ENCODE measurements at regions of chr6 and their contacts with region 1.

Region 1: GRCh38 chr6:27213544-27214125 is 33.9 kb upstream of the PRSS16 start:
- DNase-seq: no peak
- H3K4me3 Mint-ChIP-seq: no peak overlapping the region
- H3K27ac Mint-ChIP-seq: no peak overlapping the region
- H3K4me1 Mint-ChIP-seq: no peaks in the 10 kb centered on the region
- H3K27me3 Mint-ChIP-seq: no peaks in the 10 kb centered on the region
- CTCF ChIP-seq: no peak

Region 2: DNA sequence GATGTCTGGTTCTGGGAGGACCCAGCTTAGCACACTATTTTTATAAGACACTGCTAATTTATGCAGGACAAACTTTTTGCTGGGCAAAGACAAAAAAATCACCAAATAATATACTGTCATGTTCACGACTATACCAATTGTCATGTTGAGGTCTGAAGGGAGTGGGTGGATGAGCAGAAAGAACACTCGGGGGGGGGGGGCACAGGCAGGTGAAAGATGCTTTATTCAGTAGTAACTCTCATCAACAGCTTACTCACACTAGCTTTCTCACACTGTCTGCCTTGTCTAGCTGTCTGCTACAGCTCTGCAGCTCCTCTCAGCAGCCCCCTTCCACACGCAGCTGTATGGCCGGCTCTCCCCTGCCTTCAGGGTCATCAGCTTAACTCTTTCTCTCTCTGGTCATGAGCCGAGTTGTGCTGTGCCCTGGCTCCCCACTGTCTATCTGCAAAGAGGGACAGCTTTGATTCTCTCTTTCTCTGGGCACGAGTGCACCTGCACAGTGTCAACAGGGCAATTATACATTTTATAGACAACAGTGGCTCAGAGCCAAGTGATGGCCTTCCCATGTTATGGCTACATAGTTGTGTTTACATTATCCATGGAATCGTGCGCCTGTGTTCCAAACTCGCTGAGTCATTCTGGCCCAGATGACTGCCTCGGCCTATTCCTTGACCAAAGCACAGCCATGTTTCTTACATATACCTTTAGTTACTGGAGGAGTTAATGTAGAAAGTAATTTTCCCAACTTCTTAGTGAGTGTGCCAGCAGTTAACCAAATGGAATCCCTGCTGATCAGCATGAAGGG is 153.8 kb before region 1 on chr6:
- CTCF ChIA-PET with region 1: no interaction called
- intact Hi-C with region 1: no loop called
- DNase-seq: no peak
- H3K4me3 Mint-ChIP-seq: no peak overlapping the region
- H3K27ac Mint-ChIP-seq: no peak overlapping the region
- H3K4me1 Mint-ChIP-seq: no peaks in the 10 kb centered on the region
- H3K27me3 Mint-ChIP-seq: no peaks in the 10 kb centered on the region
- CTCF ChIP-seq: no peak

Region 3: DNA sequence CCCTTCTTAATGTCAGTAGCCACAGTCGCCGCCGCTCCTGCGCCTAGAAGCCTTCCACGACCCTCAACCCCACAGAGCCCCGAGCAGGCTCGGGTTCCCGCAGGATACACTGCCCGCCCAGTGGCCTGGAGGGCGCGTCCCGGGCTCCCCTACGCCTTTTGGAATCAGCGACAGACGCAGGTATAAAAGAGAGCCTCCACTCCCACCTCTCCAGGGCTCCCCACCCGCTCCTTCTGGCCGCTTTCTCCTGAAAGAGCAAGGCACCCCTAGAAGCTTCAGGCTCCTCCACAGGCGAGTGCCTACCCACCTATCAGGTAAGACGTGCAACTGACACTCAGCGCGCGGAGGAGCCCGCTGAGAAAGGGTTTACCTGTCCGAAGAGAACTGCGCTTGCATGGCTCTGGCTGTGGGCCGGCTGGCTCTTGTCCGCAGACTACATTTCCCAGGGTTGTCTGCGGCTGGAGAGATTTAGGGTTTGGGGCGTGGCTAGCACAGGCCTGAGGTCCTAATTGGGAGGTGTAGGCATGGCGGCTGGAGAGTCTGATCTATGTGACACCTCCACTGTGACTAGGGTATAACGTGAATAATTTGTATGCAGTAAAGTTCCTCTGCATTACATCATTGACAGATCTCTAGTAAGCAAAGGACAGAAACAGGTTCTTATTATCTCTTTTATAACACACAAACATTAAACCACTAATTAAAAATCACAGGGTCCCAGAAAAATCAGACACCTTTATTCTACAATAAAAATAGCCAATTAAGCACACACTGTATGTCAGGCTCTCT is 161.4 kb after region 1 on chr6:
- CTCF ChIA-PET with region 1: no interaction called
- intact Hi-C with region 1: loop called (anchors 10 kb)
- DNase-seq: peak; percentile 86
- H3K4me3 Mint-ChIP-seq: peak overlapping the region; percentile 85
- H3K27ac Mint-ChIP-seq: peak overlapping the region; percentile 51
- H3K4me1 Mint-ChIP-seq: peaks cover 11% of the 10 kb centered on the region
- H3K27me3 Mint-ChIP-seq: no peaks in the 10 kb centered on the region
- CTCF ChIP-seq: no peak